ENCODE measurements at regions of chr9 and their contacts with region 1.

Region 1: DNA sequence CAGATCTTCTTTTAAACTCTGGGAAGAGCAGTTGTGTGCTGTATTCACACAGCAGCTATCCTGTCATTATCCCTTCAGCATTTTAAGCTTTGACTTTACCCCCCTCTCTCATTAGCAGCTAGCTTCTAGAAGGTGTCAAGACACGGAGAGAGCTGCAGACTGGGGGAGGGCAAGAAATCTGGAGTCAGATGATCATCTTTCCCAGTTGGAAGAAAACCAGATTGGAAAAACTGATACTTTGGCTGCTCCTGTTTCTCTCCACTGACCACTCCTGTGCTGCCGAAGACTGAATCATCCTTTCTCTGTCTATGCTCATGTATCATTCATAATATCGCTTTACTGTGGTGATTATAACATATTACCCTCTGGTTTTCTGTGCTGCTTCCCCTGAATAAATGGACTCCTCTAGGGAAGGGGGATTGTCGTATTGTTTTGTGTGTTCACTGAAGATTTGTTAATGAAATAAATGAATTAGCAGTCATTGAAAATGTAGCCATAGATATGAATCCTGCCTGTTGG is 75.1 kb downstream of the SH3GL2 start:
- DNase-seq: no peak
- H3K4me3 Mint-ChIP-seq: no peak overlapping the region
- H3K27ac Mint-ChIP-seq: no peak overlapping the region
- H3K4me1 Mint-ChIP-seq: no peaks in the 10 kb centered on the region
- H3K27me3 Mint-ChIP-seq: peaks cover 69% of the 10 kb centered on the region
- CTCF ChIP-seq: no peak

Region 2: DNA sequence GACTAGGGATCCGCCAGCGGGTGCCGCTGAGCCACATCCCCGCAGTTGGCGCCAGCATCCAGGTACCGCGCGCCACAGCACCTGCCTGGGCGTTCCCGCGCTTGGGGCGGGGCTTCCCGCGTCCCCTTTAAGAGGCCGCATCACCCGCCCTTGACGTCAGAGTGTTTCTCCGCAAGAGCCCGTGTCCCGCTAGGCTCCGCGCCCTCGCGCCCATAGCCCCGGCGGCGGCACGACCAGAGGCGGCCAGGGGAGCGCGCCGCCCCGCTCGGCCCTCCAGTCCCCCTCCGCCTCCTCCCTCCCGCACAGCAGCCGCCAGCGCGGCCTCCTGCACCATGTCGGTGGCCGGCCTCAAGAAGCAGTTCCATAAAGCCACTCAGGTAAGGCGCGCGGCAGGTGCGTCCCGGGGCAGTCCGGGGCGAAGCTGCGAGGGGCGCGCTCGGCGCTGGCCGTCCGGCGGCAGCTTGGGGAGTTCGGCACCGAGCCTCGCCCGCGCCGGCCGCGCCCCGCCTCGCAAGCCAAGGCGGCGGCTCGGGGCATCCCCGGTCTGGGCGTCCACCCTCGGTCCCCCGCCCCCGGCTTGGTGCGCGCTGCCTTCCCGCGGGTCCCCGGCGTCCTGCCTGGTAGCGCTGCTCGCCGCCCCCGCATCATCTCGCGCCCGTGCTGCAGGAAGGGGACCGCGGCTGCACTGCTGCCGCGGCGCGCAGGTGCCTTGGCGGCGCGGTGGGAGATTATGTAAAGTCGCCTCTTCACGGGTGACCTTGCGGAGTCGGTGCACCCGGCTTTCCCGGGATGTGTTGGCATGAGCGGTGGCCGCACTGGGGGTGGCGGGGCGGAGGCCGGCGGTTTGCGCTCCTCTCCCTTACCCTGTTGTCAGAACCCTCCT is 74.9 kb before region 1 on chr9 and contains the start of gene SH3GL2:
- CTCF ChIA-PET with region 1: no interaction called
- POLR2A ChIA-PET with region 1: no interaction called
- intact Hi-C with region 1: loop called (anchors 10 kb)
- DNase-seq: peak; percentile 13
- H3K4me3 Mint-ChIP-seq: peak within 1 kb of the TSS; percentile 59
- H3K27ac Mint-ChIP-seq: no peak within 1 kb of the TSS
- H3K4me1 Mint-ChIP-seq: no peaks in the 10 kb centered on the region
- H3K27me3 Mint-ChIP-seq: peaks cover 57% of the 10 kb centered on the region
- CTCF ChIP-seq: no peak
- total RNA-seq, gene SH3GL2: not detected in 2 replicates

Region 3: DNA sequence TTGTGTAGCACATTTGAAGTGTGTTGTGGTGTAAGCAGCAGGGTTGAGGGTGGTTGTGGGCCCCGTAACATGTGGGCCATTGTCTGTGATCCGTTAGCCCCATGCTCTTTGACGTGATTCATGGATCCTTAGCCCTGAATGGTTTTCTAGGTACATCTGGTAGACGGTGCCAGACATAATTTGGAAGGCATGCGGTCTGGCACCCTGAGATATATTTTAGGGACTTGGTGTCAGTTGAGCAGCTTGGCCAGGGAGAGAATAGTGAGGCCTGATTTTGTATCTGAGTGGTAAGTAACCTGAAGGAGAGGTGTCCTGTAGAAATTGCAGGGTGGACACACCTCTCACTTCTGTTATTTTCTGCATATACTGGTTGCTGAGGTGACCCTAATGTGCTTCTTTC is 64.2 kb before region 1 on chr9:
- CTCF ChIA-PET with region 1: no interaction called
- POLR2A ChIA-PET with region 1: no interaction called
- intact Hi-C with region 1: no loop called
- DNase-seq: no peak
- H3K4me3 Mint-ChIP-seq: no peak overlapping the region
- H3K27ac Mint-ChIP-seq: no peak overlapping the region
- H3K4me1 Mint-ChIP-seq: no peaks in the 10 kb centered on the region
- H3K27me3 Mint-ChIP-seq: peaks cover 40% of the 10 kb centered on the region
- CTCF ChIP-seq: no peak

Measured in MCF 10A (cell line).